WTC11 (cell line): ENCODE measurements at regions of chr3 and their contacts with region 1.

Region 1: DNA sequence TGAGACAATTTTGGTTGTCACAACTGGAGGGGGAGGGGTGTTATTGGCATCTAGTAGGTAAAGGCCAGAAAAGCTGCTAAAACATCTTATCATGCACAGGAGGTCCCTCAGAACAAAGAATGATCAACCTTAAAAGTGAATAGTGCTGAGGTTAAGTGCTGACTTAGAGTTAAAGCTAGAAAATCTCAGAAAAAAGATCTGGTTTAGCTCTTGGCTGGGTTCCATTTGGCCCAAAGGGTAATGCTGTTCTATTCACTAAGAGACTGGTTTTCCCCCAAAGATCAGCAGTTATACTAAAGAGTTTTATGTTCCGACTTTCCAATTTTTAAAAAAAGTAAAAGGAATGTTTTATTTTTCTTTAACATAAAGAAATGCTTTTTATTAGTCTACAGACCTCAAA is 15.6 kb downstream of the DCBLD2 start:
- DNase-seq: no peak
- ATAC-seq: peak; percentile 44
- H3K4me3 Mint-ChIP-seq: 0 out of 2 replicates have a peak overlapping the region, but pooled peaks have one; percentile 20
- H3K27ac Mint-ChIP-seq: peak overlapping the region; percentile 91
- H3K4me1 Mint-ChIP-seq: peaks cover 41% of the 10 kb centered on the region; the same call in 1 of the 2 replicates
- H3K27me3 Mint-ChIP-seq: no peaks in the 10 kb centered on the region
- CTCF ChIP-seq: no peak

Region 2: GRCh38 chr3:98901392-98902350 is 15.8 kb after region 1 on chr3 and contains the start of gene DCBLD2:
- CTCF ChIA-PET with region 1: interaction called, 10 read pairs
- POLR2A ChIA-PET with region 1: interaction called, 8 read pairs
- DNase-seq: peak; percentile 98
- ATAC-seq: peak; percentile 96
- H3K4me3 Mint-ChIP-seq: peak within 1 kb of the TSS; percentile 97
- H3K27ac Mint-ChIP-seq: peak within 1 kb of the TSS; percentile 96
- H3K4me1 Mint-ChIP-seq: peaks cover 35% of the 10 kb centered on the region
- H3K27me3 Mint-ChIP-seq: no peaks in the 10 kb centered on the region
- CTCF ChIP-seq: no peak
- total RNA-seq, gene DCBLD2: 44.5 to 47.9 TPM (median 46.5 TPM) in 3 replicates

Region 3: DNA sequence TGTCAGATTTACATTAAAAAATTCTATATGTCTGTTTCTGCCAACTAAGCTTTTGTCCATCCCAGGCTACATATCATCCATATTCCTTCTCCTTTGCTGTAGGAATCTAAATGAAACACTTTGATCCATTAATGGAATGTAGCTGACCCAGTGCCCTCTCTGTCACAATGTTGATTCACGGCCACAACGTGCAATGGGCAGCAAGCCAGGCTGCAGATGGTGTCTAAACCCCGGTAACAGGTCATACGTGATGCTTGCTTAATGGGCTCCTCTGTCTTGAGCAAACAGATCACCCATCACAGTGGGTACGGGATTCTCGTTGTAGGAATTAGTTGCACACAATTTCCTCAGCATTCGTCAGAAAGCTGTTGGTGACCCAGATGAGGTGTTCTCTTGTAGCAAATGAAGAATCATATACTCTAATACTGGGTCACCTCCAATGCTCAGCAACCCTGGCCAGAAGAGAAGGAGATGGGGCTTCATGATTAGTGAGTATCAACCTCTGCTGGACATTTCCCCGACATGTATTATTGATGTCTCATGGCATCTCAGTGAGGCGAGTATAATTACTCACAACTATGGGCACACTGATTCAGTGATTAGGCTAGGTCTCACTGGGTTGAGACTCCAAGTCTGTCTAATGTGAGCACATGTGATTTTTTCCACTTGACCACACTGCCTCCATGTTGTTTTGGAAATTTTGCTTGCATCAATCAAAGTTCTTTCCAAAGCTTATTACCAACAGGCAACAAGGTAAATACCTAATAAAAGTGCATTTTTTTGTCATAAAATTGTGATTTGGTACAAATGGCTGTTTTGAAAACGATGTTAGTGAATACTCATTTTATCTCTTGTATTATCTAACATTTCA is 28.6 kb after region 1 on chr3:
- CTCF ChIA-PET with region 1: no interaction called
- POLR2A ChIA-PET with region 1: no interaction called
- DNase-seq: no peak
- ATAC-seq: no peak
- H3K4me3 Mint-ChIP-seq: no peak overlapping the region
- H3K27ac Mint-ChIP-seq: no peak overlapping the region
- H3K4me1 Mint-ChIP-seq: no peaks in the 10 kb centered on the region
- H3K27me3 Mint-ChIP-seq: peaks cover 9% of the 10 kb centered on the region; the same call in 1 of the 2 replicates
- CTCF ChIP-seq: no peak

Region 4: GRCh38 chr3:99134986-99135385 is 249.1 kb after region 1 on chr3:
- CTCF ChIA-PET with region 1: no interaction called
- POLR2A ChIA-PET with region 1: no interaction called
- DNase-seq: no peak
- ATAC-seq: no peak
- H3K4me3 Mint-ChIP-seq: no peak overlapping the region
- H3K27ac Mint-ChIP-seq: no peak overlapping the region
- H3K4me1 Mint-ChIP-seq: no peaks in the 10 kb centered on the region
- H3K27me3 Mint-ChIP-seq: no peaks in the 10 kb centered on the region
- CTCF ChIP-seq: no peak